ENCODE measurements at regions of chr2 and their contacts with region 1.

Region 1: DNA sequence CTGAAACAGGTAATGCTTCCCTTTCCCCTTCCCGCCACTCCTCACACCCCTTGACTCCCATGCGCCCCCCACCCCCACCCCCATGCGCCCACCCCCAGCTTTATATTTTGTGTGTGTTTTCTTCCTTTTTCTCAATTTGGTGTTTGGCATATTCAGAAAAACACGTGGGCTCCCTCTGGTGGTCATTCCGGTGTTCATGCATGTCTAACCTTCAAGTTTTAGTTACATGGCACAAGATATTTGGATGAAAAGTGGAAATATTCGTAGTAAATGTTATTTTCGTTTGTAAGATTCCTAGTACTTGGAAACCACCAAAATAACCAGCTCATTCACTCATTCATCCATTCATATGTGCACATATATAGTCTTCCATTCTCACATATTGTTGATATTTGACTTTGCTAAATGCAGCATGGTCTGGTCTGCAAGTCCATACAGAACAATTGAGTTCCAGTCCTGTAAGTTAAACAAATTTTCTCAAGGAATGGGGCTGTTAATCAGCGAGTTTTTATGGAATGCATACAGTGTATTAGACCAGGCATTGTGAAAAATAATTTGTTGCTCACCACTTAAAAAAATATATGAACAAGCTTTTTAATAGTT is 143.6 kb upstream of the MAP3K20 start:
- DNase-seq: peak; percentile 58 to 65
- H3K4me3 ChIP-seq: no peak overlapping the region
- H3K27ac ChIP-seq: no peak overlapping the region; the same call in 1 of the 2 replicates
- H3K4me1 ChIP-seq: peaks cover 27% of the 10 kb centered on the region
- H3K27me3 ChIP-seq: no peaks in the 10 kb centered on the region
- CTCF ChIP-seq: peak; percentile 92

Region 2: DNA sequence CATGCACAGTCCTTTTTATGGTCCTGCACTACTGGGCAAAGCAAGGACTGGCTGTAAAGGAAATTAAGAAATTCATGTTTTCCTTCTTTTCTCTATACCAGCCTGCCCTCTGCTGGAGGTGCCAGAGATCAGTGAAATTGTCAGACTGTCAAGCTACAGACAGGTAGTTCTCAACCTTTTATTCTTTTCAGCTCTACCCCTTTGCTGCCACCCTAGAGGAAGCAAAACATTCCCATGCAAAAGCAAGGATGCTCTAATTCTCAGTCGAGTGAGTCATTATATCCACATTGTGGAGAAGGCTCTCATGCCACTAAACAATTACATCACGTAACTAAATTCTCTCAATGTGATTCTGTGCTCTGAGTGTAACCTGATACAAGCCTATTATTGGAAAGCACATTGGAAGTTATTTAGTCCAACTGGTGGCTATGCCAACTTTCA is 221.4 kb before region 1 on chr2:
- CTCF ChIA-PET with region 1: interaction called, 5 read pairs
- POLR2A ChIA-PET with region 1: no interaction called
- intact Hi-C with region 1: loop called (anchors 2 kb)
- DNase-seq: peak; percentile 82 to 100
- H3K4me3 ChIP-seq: no peak overlapping the region
- H3K27ac ChIP-seq: no peak overlapping the region
- H3K4me1 ChIP-seq: peaks cover 10% of the 10 kb centered on the region
- H3K27me3 ChIP-seq: no peaks in the 10 kb centered on the region
- CTCF ChIP-seq: peak; percentile 99

Region 3: DNA sequence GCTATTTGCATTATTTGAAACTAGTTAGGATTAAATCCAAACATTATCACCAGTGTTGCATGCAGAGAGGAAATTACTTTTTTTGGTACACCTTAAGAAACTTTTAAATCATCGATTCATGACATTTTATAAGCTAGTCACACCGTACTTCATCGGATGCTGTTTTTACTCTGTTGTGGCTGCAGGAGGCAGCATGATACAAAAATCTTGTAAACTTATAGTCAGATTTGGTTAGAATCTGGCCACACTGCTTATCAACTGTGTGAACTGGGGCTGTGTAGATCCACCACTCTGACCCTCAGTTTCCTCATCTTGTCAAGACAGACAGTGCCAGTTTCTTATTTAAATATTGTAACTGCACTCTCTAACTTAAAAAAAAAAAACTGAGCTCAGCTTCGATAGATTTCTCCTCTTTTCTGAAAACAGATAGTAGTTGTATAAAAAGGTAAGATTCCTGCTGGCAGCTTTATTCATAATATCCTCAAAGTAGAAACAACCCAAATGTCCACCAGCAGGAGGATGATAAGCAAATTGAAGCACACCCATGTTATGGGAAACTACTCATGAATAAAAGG is 118.6 kb before region 1 on chr2:
- CTCF ChIA-PET with region 1: interaction called, 37 read pairs
- POLR2A ChIA-PET with region 1: no interaction called
- intact Hi-C with region 1: loop called (anchors 1 kb)
- DNase-seq: peak in 1 of 2 experiments; percentile 17
- H3K4me3 ChIP-seq: no peak overlapping the region
- H3K27ac ChIP-seq: no peak overlapping the region
- H3K4me1 ChIP-seq: no peaks in the 10 kb centered on the region
- H3K27me3 ChIP-seq: no peaks in the 10 kb centered on the region
- CTCF ChIP-seq: peak; percentile 81

Region 4: DNA sequence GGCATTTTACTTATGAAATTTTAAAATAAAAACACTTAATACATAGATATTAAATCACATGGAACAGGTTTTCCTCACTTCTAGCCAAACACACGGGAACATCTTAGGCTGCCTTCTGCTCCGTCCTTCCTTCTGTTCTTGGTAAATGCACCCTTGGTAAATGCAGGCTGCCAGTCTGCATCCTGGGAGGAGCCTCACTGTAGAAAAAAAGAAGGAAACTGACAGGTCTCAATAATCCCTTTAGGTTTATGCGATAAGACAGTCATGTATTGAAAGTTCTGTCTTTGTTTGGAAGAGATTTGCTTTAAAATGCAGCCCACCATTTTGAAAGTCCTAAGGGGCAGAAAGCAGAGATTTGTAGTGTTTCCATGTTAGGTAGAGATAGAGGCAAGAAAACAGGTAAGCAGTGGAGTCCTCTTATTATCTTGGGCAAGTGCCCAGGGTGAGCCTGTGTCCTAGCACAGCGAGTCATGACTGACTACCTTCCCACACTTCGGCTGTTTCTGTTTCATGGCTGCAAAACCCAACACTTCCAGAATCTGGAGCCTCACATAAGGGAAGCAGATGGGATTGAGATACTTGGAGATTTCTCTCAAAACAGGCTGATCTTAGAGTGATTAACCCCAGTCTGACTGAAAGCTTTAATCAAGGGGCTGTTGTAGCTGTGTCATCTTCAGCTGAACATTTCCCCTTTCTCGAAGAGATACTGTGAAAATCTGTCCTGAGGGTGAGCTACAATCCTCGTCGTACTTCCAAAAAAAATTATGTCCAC is 12.2 kb after region 1 on chr2:
- CTCF ChIA-PET with region 1: interaction called, 5 read pairs
- POLR2A ChIA-PET with region 1: interaction called, 11 read pairs
- intact Hi-C with region 1: no loop called
- DNase-seq: no peak
- H3K4me3 ChIP-seq: no peak overlapping the region
- H3K27ac ChIP-seq: no peak overlapping the region
- H3K4me1 ChIP-seq: no peaks in the 10 kb centered on the region
- H3K27me3 ChIP-seq: no peaks in the 10 kb centered on the region
- CTCF ChIP-seq: no peak

Region 5: DNA sequence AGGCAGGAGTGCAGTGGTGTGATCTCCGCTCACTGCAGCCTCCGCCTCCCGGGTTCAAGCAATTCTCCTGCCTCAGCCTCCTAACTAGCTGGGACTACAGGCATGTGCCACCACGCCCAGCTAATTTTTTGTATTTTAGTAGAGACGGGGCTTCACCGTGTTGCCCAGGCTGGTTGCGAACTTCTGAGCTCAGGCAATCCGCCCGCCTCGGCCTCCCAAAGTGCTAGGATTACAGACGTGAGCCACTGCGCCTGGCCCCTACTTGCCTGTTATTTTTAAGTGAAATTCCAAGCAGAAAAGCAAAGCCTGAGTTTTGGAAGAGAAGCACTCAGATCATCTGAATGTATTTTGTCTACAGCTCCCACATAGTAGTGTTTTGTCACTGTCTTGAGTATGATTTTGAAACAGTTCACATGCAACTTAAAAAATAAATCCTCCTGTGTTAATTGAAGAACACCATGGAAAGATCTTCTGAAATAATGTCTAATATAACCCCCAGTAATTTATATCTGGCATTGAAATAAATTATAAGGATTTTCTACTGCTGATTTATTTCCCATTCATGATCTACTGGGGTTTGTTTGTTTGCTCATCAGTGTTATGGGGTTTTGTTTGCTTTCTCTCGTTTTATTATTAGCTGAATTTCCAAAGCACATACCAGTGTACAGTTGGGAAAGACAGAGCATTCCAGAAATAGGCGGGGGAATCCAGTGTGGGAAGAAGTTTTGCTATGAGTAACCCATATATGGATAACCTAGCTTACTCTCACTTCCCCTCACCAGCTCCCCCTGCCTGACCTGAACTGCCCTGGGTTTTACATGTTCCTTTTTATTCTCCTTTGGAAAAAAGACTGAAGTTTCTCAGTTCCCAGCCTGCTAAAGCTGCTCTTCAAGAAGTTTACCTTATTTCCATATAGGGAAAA is 63.6 kb after region 1 on chr2:
- CTCF ChIA-PET with region 1: interaction called, 4 read pairs
- POLR2A ChIA-PET with region 1: interaction called, 4 read pairs
- intact Hi-C with region 1: loop called (anchors 5 kb)
- DNase-seq: peak; percentile 72 to 99
- H3K4me3 ChIP-seq: peak overlapping the region; percentile 2; the same call in 1 of the 2 replicates
- H3K27ac ChIP-seq: peak overlapping the region; percentile 90
- H3K4me1 ChIP-seq: peaks cover 67% of the 10 kb centered on the region
- H3K27me3 ChIP-seq: no peaks in the 10 kb centered on the region
- CTCF ChIP-seq: peak; percentile 75

Region 6: DNA sequence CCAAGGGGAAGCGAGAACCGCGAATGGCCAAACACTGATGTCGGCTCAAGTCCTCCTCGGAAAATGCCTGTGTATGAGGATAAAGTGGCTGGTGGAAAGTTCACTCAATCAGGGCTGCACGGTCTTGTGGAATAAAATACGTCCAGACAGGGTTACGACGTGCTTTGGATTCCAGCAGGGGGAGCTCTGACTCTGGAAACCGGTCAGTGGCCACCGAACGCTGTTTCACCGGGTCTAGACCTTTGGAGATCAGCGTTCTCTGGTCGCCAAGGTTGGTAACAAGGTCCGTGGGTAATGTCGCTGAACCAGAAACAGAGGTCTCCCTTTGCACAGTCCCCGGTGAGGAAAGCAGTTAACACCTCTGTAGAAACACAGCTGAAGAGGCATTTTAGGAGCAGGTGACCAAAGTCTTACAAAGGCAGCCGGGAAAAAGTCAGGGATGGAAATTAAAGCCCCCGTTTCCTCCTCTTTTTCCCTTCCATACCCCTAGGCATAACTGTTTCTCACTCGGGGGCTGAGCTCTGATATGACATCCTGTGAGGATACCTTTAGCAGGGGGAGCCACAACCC is 470.5 kb after region 1 on chr2:
- CTCF ChIA-PET with region 1: no interaction called
- POLR2A ChIA-PET with region 1: no interaction called
- intact Hi-C with region 1: loop called (anchors 10 kb)
- DNase-seq: peak; percentile 79 to 88
- H3K4me3 ChIP-seq: peak overlapping the region; percentile 38; the same call in 1 of the 2 replicates
- H3K27ac ChIP-seq: no peak overlapping the region
- H3K4me1 ChIP-seq: peaks cover 11% of the 10 kb centered on the region; the same call in 1 of the 2 replicates
- H3K27me3 ChIP-seq: peaks cover 24% of the 10 kb centered on the region; the same call in 1 of the 2 replicates
- CTCF ChIP-seq: peak; percentile 99

Measured in PC-9 (cell line).